H1 (cell line): ENCODE measurements at regions of chr12 and their contacts with region 1.

Region 1: DNA sequence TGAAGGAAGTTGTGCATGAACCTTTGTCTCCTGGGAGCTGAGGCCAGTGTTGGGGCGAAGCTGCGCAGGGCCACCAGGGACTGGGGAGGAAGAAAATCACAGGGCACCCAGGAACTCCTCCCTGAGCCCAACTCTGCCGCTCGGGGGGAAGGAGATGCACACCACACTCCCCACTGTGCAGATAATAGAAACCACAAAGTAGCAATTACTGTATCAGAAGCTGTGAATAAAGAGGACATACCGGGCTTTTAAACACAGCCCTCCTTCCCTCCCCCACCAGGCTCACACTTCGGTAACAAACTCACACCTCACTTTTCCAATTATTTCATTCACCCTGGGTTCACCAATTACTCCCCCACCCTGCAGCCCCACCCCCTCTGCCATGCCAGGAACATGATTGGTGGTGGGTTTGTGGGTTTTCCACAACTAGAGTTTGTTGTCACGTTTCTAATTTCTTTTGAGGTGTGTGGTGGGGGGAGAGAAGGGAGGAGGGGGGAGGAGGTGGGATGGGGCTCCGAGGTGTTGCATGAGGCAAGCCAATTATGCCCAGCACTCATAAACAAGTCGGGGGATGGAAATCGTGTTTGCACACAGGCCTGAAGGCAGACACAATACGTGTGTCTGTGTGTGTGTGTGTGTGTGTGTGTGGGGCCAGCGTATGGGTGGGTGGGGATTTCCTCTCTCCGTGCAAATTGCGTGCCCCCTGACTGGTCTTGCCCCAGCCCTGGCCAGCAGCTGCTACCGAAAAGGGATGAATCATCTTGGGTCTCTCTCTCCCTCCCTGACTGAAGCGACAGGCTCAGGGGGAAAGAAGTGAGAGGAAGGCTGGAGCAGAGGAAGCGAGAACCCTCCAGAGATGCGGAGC is 103.3 kb downstream of the RBM19 start:
- DNase-seq: no peak
- H3K4me3 ChIP-seq: no peak overlapping the region; a peak in 1 of 8 replicates
- H3K27ac ChIP-seq: peak overlapping the region; percentile 62
- H3K4me1 ChIP-seq: peaks cover 23 to 47% (median 35%) of the 10 kb centered on the region in 4 experiments
- H3K27me3 ChIP-seq: no peaks in the 10 kb centered on the region
- CTCF ChIP-seq: no peak
- EP300 ChIP-seq: no peak
- POLR2A ChIP-seq: no peak
- RAD21 ChIP-seq: no peak

Region 2: GRCh38 chr12:113392988-113393579 is 469.7 kb before region 1 on chr12:
- CTCF ChIA-PET with region 1: no interaction called
- POLR2A ChIA-PET with region 1: no interaction called
- DNase-seq: peak; percentile 41 to 96
- H3K4me3 ChIP-seq: no peak overlapping the region
- H3K27ac ChIP-seq: no peak overlapping the region
- H3K4me1 ChIP-seq: 0 out of 7 replicates have a peak, but pooled peaks cover 0 to 3% (median 0%) of the 10 kb centered on the region in 4 experiments
- H3K27me3 ChIP-seq: no peaks in the 10 kb centered on the region
- CTCF ChIP-seq: no peak
- EP300 ChIP-seq: no peak
- POLR2A ChIP-seq: no peak
- RAD21 ChIP-seq: no peak

Region 3: GRCh38 chr12:113818833-113819232 is 44.0 kb before region 1 on chr12:
- CTCF ChIA-PET with region 1: interaction called, 31 read pairs
- POLR2A ChIA-PET with region 1: interaction called, 4 read pairs
- DNase-seq: peak; percentile 23 to 86
- H3K4me3 ChIP-seq: no peak overlapping the region
- H3K27ac ChIP-seq: no peak overlapping the region
- H3K4me1 ChIP-seq: peaks cover 0 to 5% (median 4%) of the 10 kb centered on the region in 4 experiments; a peak in 5 of 7 replicates
- H3K27me3 ChIP-seq: no peaks in the 10 kb centered on the region
- CTCF ChIP-seq: peak; percentile 71 to 82 (median 74)
- EP300 ChIP-seq: no peak
- POLR2A ChIP-seq: no peak
- RAD21 ChIP-seq: peak; percentile 72 to 84

Region 4: GRCh38 chr12:113837528-113838296 is 25.1 kb before region 1 on chr12:
- CTCF ChIA-PET with region 1: interaction called, 36 read pairs
- POLR2A ChIA-PET with region 1: interaction called, 9 read pairs
- DNase-seq: no peak
- H3K4me3 ChIP-seq: no peak overlapping the region
- H3K27ac ChIP-seq: no peak overlapping the region
- H3K4me1 ChIP-seq: peaks cover 0 to 5% (median 0%) of the 10 kb centered on the region in 4 experiments; a peak in 1 of 7 replicates
- H3K27me3 ChIP-seq: no peaks in the 10 kb centered on the region
- CTCF ChIP-seq: peak in 1 of 3 experiments; percentile 9; a peak in 1 of 4 replicates
- EP300 ChIP-seq: no peak
- POLR2A ChIP-seq: no peak
- RAD21 ChIP-seq: no peak; a peak in 1 of 4 replicates

Region 5: DNA sequence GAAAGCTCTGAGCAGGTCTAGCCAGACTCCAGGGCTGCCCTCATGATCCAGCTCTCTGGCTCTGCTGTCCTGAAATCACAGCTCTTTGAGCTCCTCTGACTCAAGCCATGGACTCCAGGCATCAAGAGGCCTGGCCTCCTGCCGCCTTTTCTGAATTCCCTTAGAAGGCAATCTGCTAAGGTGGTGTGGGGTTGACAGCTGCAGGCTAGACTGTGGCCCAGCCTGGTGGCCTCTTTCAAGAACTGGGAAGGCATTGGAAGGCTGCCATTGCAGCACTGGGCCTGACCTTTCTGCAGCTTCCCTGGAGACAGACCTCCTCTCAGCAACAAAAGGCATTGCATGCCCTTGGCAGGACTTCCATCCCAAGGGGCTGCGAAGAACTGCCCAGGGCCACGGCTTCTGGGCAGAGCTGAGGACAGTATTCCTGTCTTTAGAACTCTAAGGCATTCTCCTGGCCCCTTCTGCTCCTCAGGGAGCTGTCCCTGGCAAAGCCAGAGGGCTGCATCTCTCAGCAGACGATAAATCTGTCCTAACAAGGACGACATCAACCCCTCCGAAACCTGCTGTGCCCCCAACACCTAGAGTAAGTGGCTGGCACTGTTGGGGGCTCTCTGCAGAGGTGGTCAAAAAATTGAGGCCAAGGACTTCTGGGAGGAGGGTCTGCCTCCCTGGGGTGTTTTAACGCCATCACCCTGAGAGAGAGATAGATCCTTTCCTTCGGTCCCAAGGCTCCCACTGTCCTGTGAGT is 12.3 kb before region 1 on chr12:
- CTCF ChIA-PET with region 1: interaction called, 37 read pairs
- POLR2A ChIA-PET with region 1: interaction called, 14 read pairs
- DNase-seq: no peak
- H3K4me3 ChIP-seq: no peak overlapping the region
- H3K27ac ChIP-seq: no peak overlapping the region; the same call in 1 of the 2 replicates
- H3K4me1 ChIP-seq: no peaks in the 10 kb centered on the region; a peak in 1 of 7 replicates
- H3K27me3 ChIP-seq: no peaks in the 10 kb centered on the region
- CTCF ChIP-seq: no peak
- EP300 ChIP-seq: no peak
- POLR2A ChIP-seq: no peak
- RAD21 ChIP-seq: no peak

Region 6: DNA sequence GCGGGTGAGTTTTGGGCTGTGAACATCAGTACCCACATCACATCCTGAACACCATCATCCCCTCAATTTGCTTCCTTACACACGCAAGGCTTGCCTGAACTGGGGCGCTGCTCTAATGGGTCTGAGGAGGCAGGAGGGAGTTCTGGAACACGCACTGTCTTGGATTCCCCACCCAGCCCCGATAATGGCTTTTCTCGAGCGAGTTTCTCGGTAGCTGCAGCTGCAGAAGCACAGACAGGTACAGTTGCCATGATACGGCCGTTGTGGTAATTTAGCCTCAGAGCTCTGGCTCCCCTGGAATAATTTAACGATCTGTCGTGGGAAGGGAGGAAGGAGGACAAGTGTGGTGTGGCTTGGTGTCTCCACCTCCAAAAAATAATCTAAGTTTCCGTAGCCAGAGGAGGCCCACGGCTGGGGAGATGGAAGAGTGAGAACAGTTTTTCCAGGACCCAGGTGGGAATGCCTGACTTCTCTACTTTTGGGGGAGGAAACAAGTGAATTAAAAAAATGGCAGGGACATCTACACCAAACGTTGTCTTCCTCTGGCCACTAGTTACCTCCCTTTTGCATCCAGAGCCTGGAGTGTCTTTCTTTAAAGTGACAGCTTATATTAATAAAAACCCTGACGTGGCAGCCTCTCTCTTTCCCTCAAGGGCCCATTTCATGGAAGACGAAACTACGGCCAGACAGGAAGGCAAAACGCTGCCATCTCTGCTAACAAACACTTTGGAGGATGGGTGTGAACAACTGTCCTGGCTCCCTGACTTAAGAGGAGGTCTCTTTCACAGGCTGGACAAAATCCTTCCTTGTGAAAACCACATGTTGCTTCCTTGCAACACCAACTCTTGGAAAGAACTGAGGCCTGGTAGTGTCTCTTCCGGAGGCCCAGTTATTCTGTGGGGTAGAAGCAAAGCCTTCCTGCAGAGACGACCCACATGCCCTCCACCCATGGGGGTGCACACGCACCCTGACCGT is 18.5 kb after region 1 on chr12:
- CTCF ChIA-PET with region 1: interaction called, 40 read pairs
- POLR2A ChIA-PET with region 1: interaction called, 8 read pairs
- DNase-seq: no peak
- H3K4me3 ChIP-seq: no peak overlapping the region
- H3K27ac ChIP-seq: no peak overlapping the region
- H3K4me1 ChIP-seq: no peaks in the 10 kb centered on the region
- H3K27me3 ChIP-seq: no peaks in the 10 kb centered on the region
- CTCF ChIP-seq: no peak
- EP300 ChIP-seq: no peak
- POLR2A ChIP-seq: no peak
- RAD21 ChIP-seq: no peak

Region 7: DNA sequence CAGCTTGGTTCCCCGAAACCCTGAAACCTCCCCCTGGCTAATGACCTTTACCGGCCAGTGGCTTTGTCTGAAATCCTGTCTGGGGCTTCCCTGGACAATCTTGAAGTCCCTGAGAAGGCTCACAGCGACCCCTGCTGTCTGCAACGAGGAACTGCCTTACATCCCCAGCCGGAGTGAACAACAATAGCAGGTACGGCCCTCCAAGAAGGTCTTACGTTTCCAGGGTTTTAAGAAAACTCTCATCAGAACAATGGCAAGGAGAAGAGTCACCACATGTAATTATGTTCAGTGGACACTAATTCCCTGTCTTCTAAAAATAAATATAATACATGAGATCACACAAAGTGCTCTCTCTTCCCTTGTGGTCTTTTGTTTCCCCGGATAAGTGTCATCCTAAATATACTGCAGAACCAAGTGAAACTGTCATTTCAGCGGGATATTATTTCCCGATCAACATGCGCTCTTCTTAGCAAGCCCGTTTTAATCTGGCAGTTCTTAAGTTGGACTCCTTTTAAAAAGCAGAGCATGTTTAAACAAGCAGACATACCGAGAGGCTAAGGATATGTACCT is 50.0 kb after region 1 on chr12:
- CTCF ChIA-PET with region 1: interaction called, 21 read pairs
- POLR2A ChIA-PET with region 1: interaction called, 3 read pairs
- DNase-seq: peak; percentile 77 to 94
- H3K4me3 ChIP-seq: no peak overlapping the region
- H3K27ac ChIP-seq: no peak overlapping the region
- H3K4me1 ChIP-seq: peaks cover 0 to 2% (median 0%) of the 10 kb centered on the region in 4 experiments; a peak in 1 of 7 replicates
- H3K27me3 ChIP-seq: no peaks in the 10 kb centered on the region
- CTCF ChIP-seq: peak; percentile 86 to 95 (median 94)
- EP300 ChIP-seq: no peak
- POLR2A ChIP-seq: no peak
- RAD21 ChIP-seq: peak; percentile 97 to 99

Region 8: GRCh38 chr12:114186241-114187002 is 323.6 kb after region 1 on chr12:
- CTCF ChIA-PET with region 1: no interaction called
- POLR2A ChIA-PET with region 1: no interaction called
- DNase-seq: peak; percentile 53
- H3K4me3 ChIP-seq: peak overlapping the region in 1 of 4 experiments; percentile 23; a peak in 1 of 8 replicates
- H3K27ac ChIP-seq: no peak overlapping the region
- H3K4me1 ChIP-seq: peaks cover 3 to 10% (median 8%) of the 10 kb centered on the region in 4 experiments; a peak in 4 of 7 replicates
- H3K27me3 ChIP-seq: peaks cover 0 to 3% (median under 1%) of the 10 kb centered on the region in 4 experiments; a peak in 2 of 7 replicates
- CTCF ChIP-seq: no peak
- EP300 ChIP-seq: no peak
- POLR2A ChIP-seq: no peak
- RAD21 ChIP-seq: peak in 1 of 2 experiments; percentile 1; a peak in 1 of 4 replicates